Left cardiac atrium (tissue), 4 donors: ENCODE measurements at regions of chr2 and their contacts with region 1.

Region 1: DNA sequence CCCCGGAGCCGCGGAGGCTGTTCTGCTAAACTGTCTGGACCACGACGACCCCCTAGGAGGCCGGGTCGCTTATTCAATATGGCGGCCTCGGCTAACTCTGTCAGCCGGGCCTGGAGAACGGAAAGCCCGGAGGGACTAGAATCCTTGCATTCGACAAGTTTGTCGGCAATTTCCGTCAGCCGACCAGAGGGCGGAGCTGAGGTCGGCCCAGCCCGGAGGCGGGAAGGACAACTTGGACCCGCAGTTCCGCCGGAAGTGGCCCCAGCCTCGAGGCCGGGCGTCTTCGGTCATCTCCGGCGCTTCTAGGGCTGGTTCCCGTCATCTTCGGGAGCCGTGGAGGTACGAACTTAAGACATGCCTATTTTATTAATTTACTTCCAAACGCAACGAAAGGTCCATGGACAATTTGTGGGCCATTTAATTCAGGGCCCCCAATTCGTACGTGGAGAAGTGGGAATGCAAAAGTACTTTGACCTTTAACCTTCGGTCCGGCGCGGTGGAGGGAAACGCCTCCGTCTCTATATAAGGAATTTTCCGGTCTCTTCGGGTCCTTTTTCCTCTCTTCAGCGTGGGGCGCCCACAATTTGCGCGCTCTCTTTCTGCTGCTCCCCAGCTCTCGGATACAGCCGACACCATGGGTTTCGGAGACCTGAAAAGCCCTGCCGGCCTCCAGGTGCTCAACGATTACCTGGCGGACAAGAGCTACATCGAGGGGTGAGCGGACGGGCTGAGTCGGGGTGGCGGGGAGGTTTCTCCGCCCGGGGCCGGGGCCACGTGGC is at the starts of genes EEF1B2 and NDUFS1:
- DNase-seq: peak; percentile 98
- ATAC-seq: peak; percentile 96 to 97
- total RNA-seq, gene EEF1B2: 308 to 357 TPM
- total RNA-seq, gene NDUFS1: 236 to 289 TPM

Region 2: DNA sequence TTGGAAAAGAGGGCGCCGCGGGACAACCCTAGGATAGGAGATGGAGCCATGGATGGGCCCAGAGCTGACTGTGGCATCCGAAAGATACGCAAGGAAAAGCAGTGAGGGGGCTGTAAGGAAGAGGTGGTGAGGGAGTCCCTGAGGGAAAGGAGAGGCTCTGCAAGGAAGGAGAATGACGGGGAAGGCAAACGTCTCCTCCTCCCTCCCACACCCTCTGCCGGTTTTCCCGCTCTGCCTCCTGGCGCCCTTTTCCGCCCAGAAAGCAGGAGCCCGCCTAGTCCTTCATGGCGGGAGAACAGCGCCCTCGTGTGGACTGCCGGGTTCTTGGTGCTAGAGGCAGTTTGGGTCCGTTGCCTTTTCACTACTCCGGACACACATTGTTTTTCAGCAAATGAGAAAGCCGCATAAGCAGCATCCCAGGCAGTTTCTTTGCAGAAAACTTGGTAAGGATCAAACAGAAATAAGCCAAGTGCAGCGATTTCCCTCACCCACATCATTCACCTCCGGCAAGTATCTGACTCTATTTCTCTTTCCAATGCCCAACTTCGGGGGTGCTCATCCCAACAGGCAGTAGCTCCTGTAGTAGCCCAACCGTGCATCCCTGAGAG is 273.9 kb before region 1 on chr2:
- intact Hi-C with region 1: no loop called
- DNase-seq: peak; percentile 88
- ATAC-seq: peak; percentile 89 to 95

Region 3: DNA sequence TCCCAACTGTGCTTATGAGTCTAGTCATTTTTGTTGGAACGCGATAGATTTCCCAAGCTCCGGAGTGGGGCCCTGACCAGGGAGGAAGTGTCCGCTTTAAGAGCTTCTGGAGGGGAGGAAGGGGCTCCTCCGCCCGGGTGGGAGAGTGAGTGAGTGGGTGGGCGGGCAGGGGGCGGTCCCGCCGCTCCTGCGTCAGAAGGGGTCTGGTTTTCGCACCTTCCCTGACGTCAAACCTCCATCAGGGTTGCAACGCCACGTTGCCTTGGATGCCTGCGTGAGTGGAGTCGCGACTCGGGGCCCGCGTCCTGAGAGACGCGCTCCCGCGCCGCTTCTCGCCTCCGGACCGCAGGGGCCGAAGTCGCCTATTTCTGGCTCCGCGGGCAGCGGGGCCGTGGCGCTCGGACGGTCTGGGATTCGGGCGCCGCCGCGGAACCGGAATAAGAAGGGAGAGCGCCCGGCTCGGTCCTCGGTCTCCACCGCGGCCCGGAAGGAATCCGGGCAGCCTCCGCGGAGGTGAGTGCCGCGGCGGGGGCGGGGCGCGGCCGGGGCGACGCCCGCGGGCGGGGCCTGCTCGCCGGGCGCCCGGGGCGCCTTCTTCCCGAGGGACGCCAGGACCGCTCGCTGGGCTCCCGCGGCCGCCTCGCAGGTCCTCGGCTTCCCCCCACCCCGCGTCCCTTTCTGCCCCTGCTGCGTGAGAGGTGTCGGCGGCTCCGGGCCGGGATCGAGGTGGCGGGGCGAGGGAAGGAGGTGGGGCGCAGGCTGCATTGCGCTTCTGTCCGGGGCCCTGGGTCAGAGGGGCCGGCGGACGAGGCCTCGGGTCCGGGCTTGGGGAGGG is 115.1 kb after region 1 on chr2 and contains the start of gene ZDBF2:
- intact Hi-C with region 1: loop called in 1 of 2 experiments (anchors 5 kb)
- DNase-seq: peak; percentile 47
- ATAC-seq: peak; percentile 94
- total RNA-seq, gene ZDBF2: 8.5 to 10.4 TPM

Region 4: DNA sequence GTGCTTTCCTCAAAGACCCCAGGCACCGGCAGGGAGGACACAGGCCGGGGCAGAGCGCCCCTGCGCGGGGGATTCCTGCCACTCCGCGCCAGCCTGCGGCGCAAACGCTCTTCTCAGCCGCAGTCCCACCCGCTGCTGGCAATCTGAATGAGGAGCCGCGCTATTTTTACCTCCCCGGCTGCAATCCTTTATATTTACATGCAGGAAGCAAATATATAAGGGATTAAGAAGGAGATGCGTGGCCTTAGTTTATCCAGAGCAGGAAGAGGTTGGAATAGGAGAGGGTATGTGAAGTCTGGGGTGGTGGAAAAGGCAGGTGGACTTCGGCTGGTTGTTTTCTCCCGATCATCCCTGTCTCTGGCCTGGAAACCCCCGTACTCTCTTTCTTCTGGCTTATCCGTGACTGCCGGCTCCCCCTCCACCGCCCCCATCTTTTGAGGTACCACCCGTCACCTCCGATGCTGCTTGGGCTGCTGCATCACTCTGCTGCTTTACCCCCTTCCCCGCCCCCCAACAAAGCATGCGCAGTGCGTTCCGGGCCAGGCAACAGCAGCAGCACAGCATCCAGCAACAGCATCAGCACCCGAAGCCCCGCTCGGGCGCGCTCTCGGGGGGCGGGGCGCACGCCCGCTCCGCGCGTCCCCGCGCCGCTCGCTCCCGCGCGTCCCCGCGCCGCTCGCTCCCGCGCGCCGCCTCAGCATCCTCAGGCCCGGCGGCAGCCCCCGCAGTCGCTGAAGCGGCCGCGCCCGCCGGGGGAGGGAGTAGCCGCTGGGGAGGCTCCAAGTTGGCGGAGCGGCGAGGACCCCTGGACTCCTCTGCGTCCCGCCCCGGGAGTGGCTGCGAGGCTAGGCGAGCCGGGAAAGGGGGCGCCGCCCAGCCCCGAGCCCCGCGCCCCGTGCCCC is 283.5 kb after region 1 on chr2 and contains the start of gene ADAM23:
- intact Hi-C with region 1: loop called in 1 of 2 experiments (anchors 10 kb)
- DNase-seq: peak; percentile 51
- ATAC-seq: peak; percentile 91
- total RNA-seq, gene ADAM23: 30.2 to 31.1 TPM